ENCODE measurements at regions of chr1 and their contacts with region 1.

Region 1: GRCh38 chr1:24111996-24112779 is at the start of gene MYOM3:
- DNase-seq: peak in 13 of 14 experiments; percentile 14 to 61 (median 34)
- ATAC-seq: peak; percentile 88
- H3K4me3 ChIP-seq: no peak within 1 kb of the TSS
- H3K4me3 Mint-ChIP-seq: no peak within 1 kb of the TSS
- H3K27ac ChIP-seq: no peak within 1 kb of the TSS
- H3K27ac Mint-ChIP-seq: no peak within 1 kb of the TSS
- H3K4me1 ChIP-seq: peaks cover 9% of the 10 kb centered on the region
- H3K4me1 Mint-ChIP-seq: peaks cover 5% of the 10 kb centered on the region
- H3K27me3 ChIP-seq: peaks cover 0 to 8% of the 10 kb centered on the region in 2 experiments
- H3K27me3 Mint-ChIP-seq: peaks cover 32% of the 10 kb centered on the region
- CTCF ChIP-seq: no peak
- total RNA-seq, gene MYOM3: not detected

Region 2: DNA sequence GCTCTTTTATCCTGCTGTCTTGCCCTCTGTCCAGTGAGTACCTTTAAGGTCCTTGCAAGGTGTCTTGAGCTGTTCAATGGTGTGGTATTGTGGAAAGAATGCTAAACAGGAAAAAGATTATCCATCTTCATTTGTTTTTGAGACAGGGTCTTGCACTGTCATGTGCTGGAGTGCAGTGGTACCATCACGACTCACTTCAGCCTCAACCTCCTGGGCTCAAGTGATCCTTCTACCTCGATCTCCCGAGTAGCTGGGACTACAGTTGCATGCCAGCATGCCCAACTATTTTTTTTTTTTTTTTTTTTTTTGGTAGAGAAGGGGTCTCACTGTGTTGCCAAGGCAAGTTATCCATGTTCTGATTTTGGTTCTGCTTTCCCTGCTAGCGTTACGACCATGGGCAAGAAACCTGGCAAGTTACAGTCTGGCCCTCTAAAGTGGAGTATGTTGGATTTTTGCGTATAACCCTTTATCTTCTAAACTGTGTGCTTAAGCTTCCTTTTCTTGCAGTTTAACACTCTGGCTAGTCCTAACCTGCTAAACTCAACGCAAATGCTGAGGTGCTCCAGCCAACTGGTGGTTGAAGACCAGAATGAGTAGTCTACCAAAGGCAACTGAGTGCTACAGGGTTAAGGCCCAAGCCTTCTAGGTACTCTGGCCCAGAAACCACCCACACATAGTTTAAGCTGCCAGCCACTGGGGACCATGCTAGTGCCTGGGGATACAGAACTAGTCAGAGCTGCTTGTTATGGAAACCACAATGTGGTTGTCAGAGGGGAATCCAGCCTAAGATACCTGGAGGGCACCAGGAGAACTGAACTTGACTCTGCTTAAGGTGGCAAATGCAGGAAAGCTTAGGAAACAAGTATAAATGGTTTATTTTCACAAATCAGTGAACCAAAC is 412.7 kb before region 1 on chr1:
- CTCF ChIA-PET with region 1: no interaction called
- POLR2A ChIA-PET with region 1: no interaction called
- intact Hi-C with region 1: no loop called
- DNase-seq: no peak
- ATAC-seq: no peak
- H3K4me3 ChIP-seq: no peak overlapping the region
- H3K4me3 Mint-ChIP-seq: no peak overlapping the region
- H3K27ac ChIP-seq: no peak overlapping the region
- H3K27ac Mint-ChIP-seq: no peak overlapping the region
- H3K4me1 ChIP-seq: peaks cover 10% of the 10 kb centered on the region
- H3K4me1 Mint-ChIP-seq: peaks cover 43% of the 10 kb centered on the region
- H3K27me3 ChIP-seq: no peaks in the 10 kb centered on the region
- H3K27me3 Mint-ChIP-seq: no peaks in the 10 kb centered on the region
- CTCF ChIP-seq: no peak

Region 3: GRCh38 chr1:24070821-24071393 is 41.3 kb before region 1 on chr1:
- CTCF ChIA-PET with region 1: no interaction called
- POLR2A ChIA-PET with region 1: no interaction called
- intact Hi-C with region 1: loop called in 1 of 2 experiments (anchors 2 kb)
- DNase-seq: peak; percentile 52 to 83 (median 61)
- ATAC-seq: peak; percentile 88
- H3K4me3 ChIP-seq: no peak overlapping the region
- H3K4me3 Mint-ChIP-seq: no peak overlapping the region
- H3K27ac ChIP-seq: no peak overlapping the region
- H3K27ac Mint-ChIP-seq: no peak overlapping the region
- H3K4me1 ChIP-seq: peaks cover 6% of the 10 kb centered on the region
- H3K4me1 Mint-ChIP-seq: no peaks in the 10 kb centered on the region
- H3K27me3 ChIP-seq: no peaks in the 10 kb centered on the region
- H3K27me3 Mint-ChIP-seq: peaks cover 10% of the 10 kb centered on the region
- CTCF ChIP-seq: peak; percentile 94

Measured in CD4-positive, alpha-beta T cell (primary cell).